ENCODE measurements at regions of chr19 and their contacts with region 1.

Region 1: GRCh38 chr19:38929929-38930775 is at the start of gene SARS2:
- DNase-seq: peak; percentile 97
- CTCF ChIP-seq: peak; percentile 95

Region 2: DNA sequence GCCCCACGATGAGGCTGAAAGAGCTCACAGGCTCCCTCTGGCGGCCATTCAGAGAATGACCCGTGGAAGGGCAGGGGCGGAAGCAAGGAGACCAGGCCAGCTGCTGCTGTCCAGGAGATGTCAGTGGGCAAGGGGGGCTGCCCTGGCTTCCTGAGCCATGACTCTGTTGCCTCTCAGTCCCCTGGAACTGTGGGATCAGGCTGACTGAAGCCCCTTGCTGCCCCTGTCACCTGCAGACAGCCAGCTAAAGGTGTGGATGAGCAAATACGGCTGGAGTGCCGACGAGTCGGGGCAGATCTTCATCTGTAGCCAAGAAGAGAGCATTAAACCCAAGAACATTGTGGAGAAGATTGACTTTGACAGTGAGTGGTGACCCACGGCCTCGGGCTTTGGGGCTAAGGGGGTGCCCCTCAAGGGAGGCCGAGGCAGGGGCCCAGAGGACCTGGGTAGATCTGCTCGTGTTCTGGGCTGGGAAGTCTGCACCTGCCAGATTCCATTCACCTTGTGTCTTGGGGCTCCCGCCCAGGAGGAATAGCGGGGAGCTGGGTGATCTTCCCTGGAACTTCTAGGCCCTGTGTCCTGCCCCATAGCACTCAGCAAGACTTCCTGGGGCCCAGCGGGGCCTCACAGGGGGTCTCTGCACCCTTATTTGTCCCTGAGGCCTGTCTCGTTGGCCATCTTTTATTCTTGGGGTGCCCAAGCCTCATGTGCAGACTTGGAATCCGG is 295.2 kb before region 1 on chr19:
- CTCF ChIA-PET with region 1: interaction called, 21 read pairs
- POLR2A ChIA-PET with region 1: no interaction called
- DNase-seq: peak; percentile 82
- CTCF ChIP-seq: peak; percentile 83

Region 3: GRCh38 chr19:38769635-38770211 is 160.4 kb before region 1 on chr19:
- CTCF ChIA-PET with region 1: interaction called, 13 read pairs
- POLR2A ChIA-PET with region 1: no interaction called
- DNase-seq: peak; percentile 87
- CTCF ChIP-seq: peak; percentile 90

Region 4: DNA sequence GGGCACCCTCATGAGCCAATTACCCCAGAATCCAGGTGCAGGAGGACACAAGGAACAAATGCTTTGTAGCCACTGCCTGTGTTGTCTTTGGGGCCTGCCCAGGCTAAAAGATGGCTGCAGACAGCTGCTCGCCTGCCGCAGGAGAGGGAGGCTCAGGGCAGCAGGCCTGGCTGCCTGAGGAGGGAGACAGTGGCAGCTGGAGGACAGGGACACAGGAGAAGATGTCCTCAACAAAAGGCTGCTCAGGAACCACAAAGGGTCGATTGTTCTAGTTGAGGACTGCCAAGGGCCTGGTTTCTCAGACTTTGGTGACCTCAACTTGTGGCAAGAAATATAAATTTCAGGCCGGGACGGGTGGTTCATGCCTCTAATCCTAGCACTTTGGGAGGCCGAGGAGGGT is 38.4 kb before region 1 on chr19:
- CTCF ChIA-PET with region 1: interaction called, 19 read pairs
- POLR2A ChIA-PET with region 1: no interaction called
- DNase-seq: no peak
- CTCF ChIP-seq: no peak

Region 5: DNA sequence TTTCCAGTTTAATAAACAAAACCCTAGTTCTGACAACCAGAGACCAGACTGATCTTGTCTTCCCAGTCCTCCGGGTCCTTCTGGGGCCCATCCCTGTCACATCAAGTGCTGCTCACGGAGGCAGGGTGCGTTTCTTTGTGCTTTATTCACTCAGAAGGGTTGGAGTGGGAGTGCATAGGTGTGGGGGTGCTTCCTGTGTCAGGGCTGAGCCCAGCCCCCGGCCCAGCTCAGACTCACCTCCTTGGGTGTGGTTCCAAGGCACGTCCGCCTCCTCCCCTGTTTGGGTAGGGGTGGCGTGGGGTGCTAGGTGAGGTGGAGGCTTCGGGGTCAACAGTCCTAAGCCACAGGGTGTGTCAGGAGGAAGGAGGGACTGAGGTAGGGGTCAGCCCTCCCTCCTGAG is 21.3 kb before region 1 on chr19:
- CTCF ChIA-PET with region 1: interaction called, 31 read pairs
- POLR2A ChIA-PET with region 1: no interaction called
- DNase-seq: no peak
- CTCF ChIP-seq: no peak

Region 6: DNA sequence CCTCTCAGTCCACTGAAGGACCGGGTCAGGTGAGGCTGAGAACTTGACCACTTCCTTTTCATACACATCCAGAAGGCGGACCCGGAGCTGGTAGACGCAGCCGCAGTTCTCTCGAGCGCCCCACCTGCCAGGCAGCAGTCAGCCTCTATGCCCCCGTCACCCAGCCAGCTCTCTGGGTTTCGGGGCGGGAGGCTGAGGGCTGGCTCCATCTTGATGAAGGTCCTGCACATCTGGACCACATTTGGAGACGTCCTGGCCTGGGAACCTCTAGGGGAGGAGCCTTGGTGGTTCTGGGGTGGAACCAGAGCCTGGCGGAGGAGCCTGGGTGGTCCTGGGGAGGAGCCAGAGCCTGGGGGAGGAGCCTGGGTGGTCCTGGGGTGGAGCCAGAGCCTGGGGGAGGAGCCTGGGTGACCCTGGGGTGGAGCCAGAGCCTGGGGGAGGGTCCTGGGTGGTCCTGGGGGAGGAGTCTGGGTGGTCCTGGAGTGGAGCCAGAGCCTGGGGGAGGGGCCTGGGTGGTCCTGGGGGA is 14.9 kb after region 1 on chr19:
- CTCF ChIA-PET with region 1: interaction called, 13 read pairs
- POLR2A ChIA-PET with region 1: no interaction called
- DNase-seq: no peak
- CTCF ChIP-seq: no peak

Measured in GM10248 (cell line).